Testis (tissue), 5 donors: ENCODE measurements at regions of chr3 and their contacts with region 1.

Region 1: GRCh38 chr3:63349583-63350521 is 71.7 kb downstream of the SYNPR start:
- DNase-seq: peak; percentile 70
- H3K4me3 ChIP-seq: no peak overlapping the region
- H3K27ac ChIP-seq: no peak overlapping the region
- H3K4me1 ChIP-seq: no peaks in the 10 kb centered on the region
- H3K27me3 ChIP-seq: no peaks in the 10 kb centered on the region
- CTCF ChIP-seq: peak; percentile 66 to 71 (median 71)
- POLR2A ChIP-seq: no peak

Region 2: DNA sequence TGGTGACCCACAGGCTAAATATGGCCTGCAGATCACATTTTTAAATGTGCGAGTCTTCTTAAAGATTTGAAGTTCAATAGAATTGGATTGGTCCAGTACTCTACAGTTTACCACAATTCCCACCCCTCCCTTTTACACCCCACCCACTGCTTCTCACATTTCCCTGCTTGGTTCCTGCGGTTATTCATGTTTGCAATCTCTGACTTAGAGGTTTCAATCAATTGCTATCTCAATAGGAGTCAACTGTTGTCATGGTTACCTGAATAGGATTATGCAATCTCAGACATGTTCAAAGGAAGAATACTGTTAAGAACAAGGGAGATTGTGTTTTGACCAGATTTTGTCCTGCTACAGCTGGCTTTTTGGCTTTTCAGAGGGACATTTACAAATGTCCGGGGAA is 464.4 kb after region 1 on chr3:
- intact Hi-C with region 1: loop called (anchors 5 kb)
- DNase-seq: no peak
- H3K4me3 ChIP-seq: no peak overlapping the region
- H3K27ac ChIP-seq: no peak overlapping the region
- H3K4me1 ChIP-seq: peaks cover 4% of the 10 kb centered on the region
- H3K27me3 ChIP-seq: no peaks in the 10 kb centered on the region
- CTCF ChIP-seq: no peak
- POLR2A ChIP-seq: no peak